HEK293T (cell line): ENCODE measurements at regions of chr11 and their contacts with region 1.

Region 1: GRCh38 chr11:66480117-66480938 is at the start of gene DPP3:
- DNase-seq: peak; percentile 96

Region 2: DNA sequence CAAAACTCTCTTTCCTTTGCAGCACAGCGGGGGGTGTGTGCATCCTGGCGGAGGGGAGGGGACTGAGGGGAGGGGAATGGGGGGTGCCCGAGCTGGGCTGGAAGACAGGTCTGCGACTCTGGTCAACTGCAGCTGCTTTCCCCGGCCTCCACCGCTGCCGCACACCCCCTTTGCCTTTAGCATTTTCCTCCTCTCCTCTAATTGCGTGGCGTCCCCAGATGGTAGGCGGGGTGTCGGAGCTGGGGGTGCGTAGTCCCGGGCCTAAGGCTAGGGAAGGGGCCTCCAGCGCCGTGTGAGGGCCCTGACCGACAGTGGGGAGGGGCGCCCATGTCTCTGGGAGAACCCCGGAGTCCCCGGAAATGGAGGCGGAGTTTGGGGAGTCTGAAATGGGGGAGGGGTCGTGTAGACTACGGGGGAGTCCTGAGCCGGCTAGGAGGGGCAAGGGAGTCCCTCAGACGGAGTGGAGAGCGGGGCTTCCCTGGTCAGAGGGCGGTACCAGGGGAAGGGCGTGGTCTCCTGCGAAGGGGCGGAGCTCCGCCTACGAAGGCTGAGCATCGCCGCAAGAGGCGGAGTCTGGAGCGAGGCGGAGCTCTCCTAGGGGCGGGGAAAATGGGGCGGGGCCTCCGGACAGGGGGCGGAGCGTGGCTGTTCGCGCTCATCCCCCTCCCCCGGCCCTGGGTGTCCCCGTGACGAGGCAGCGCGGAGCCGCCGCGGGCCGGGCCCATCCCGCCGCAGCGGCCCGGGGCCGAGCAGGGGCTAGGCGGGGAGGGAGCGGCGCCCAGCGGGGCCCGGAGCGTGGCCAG is 13.9 kb before region 1 on chr11 and contains the start of gene PELI3:
- CTCF ChIA-PET with region 1: interaction called, 8 read pairs
- POLR2A ChIA-PET with region 1: interaction called, 14 read pairs
- DNase-seq: peak; percentile 100

Region 3: DNA sequence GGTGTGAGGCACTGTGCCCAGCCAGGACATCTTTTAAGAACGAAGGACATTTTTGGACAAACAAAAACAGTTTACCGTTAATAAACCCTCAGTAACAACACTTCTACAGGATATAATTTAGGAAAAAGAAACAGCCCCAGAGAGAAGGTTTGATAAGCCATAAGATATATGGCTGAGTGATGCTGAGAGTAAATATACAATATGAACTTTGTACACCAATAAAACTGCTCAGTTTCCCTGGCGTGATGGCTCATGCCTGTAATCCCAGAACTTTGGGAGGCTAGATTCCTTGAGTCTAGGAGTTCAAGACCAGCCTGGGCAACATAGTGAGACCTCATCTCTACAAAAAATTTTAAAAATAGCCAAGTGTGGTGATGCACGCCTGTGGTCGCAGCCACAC is 18.2 kb after region 1 on chr11:
- CTCF ChIA-PET with region 1: no interaction called
- POLR2A ChIA-PET with region 1: no interaction called
- DNase-seq: no peak

Region 4: DNA sequence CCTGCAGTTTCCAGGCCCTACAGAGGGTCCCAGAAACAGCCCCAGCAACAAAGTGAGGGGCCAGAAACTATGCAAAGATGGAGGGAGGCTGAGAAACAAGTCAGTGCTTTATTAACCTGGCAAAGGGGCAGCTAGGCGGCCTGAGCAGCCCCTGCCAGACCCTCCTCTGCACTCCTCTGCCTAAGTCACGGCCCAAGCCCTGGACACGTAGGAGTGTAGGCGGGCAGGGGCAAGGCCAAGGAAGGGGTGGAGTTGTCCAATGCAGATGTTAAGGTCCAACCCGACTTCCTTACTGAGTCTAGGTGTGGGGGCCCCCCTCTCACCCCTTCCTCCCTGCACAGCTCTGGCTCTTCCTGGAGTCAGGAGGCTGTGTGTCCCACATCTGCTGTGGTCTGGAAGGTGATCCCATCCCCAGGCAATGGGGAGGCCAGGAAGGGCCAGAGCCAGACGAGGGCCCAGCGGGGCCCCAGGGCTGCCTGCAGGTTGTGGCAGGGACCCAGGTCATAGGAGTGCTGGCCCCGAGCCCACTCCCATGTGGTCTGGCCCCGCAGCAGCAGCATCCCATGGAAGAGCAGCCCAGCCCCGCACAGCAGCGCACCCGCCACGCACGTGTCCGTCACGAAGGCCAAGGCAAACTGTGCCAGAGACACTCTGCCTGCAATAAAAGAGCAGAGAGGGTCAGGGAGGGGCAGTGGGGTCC is 59.0 kb after region 1 on chr11:
- CTCF ChIA-PET with region 1: no interaction called
- POLR2A ChIA-PET with region 1: no interaction called
- DNase-seq: no peak